MCF 10A (cell line): ENCODE measurements at regions of chr1 and their contacts with region 1.

Region 1: DNA sequence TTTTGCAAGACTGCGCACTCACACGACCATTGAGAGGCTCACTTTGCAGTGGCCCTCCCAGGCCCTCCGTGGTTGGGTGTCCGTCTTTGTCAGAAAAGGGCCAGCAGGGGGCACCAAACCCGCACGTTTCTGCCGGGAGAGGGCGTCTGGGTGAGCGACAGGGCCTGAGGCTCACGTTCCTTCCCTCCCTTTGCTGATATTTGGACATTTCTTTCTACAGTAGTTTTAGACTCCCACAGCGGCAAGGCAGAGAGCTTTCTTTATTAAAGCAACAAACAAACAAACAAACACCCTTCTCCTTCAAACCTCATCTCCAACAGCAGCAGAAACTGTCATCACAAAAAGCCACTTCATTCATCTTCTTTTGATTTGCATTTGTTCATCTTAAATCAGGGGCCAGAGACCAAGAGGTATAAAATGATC is 79.2 kb upstream of the WDR26 start:
- DNase-seq: peak; percentile 97
- H3K4me3 Mint-ChIP-seq: no peak overlapping the region
- H3K27ac Mint-ChIP-seq: no peak overlapping the region
- H3K4me1 Mint-ChIP-seq: peaks cover 14% of the 10 kb centered on the region
- H3K27me3 Mint-ChIP-seq: no peaks in the 10 kb centered on the region
- CTCF ChIP-seq: peak; percentile 100

Region 2: DNA sequence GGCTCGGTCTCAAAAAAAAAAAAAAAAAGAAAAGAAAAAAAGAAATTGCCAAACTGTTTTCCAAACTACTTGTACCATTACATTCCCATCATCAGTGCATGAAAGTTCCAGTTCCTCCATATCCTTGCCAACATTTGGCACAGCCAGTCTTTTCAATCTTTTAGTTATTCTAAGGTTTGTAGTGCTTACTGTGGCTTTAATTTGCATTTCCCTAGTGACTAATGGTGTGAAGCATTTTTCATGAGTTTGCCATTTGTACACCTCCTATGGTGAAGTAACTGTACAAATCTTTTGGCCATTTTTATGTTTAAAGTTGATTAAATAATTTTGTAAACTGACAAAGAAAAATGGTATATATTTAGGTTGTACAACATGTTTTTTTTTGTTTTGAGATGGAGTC is 260.1 kb before region 1 on chr1:
- CTCF ChIA-PET with region 1: no interaction called
- POLR2A ChIA-PET with region 1: no interaction called
- intact Hi-C with region 1: no loop called
- DNase-seq: no peak
- H3K4me3 Mint-ChIP-seq: no peak overlapping the region
- H3K27ac Mint-ChIP-seq: no peak overlapping the region
- H3K4me1 Mint-ChIP-seq: peaks cover 7% of the 10 kb centered on the region
- H3K27me3 Mint-ChIP-seq: no peaks in the 10 kb centered on the region
- CTCF ChIP-seq: no peak

Region 3: DNA sequence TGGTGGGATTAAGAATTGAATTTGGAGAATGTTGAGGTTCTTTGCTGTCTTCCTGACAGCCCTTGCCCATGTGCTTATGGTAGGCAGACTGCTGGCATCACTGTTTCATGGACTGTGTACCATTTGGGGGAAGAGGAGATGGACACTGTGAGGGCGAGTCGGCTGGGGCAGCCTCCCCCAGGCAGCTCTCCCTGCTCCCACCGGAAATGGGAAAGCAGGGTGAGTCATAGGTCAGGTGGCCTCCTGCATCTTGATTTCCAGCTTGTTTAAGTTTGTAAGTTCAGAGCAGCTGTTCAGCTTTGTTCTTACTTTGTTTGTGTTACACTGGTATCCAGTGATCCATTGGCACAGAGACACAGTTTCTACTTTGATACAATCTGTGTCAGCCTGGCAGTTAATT is 15.1 kb after region 1 on chr1:
- CTCF ChIA-PET with region 1: interaction called, 105 read pairs
- POLR2A ChIA-PET with region 1: interaction called, 6 read pairs
- intact Hi-C with region 1: no loop called
- DNase-seq: peak; percentile 76
- H3K4me3 Mint-ChIP-seq: no peak overlapping the region
- H3K27ac Mint-ChIP-seq: no peak overlapping the region
- H3K4me1 Mint-ChIP-seq: peaks cover 24% of the 10 kb centered on the region
- H3K27me3 Mint-ChIP-seq: no peaks in the 10 kb centered on the region
- CTCF ChIP-seq: no peak

Region 4: DNA sequence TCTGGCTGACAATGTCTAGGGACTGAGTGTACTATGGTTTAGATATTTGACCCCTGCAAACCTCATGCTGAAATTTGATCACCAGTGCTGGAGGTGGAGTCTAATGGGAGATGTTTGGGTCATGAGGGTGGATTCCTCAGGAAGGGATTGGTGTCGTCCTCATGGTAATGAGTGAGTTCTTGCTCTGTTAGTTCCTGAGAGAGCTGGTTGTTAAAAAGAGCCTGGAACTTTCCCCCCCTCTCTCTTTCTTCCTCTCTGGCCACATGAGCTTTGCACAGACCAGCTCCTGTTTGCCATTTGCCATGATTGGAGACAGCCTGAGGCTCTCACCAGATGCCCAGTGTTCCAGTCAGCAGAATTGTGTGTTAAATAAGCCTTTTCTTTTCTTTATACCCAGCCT is 65.7 kb after region 1 on chr1:
- CTCF ChIA-PET with region 1: interaction called, 15 read pairs
- POLR2A ChIA-PET with region 1: no interaction called
- intact Hi-C with region 1: no loop called
- DNase-seq: peak; percentile 63
- H3K4me3 Mint-ChIP-seq: no peak overlapping the region
- H3K27ac Mint-ChIP-seq: no peak overlapping the region
- H3K4me1 Mint-ChIP-seq: peaks cover 8% of the 10 kb centered on the region
- H3K27me3 Mint-ChIP-seq: no peaks in the 10 kb centered on the region
- CTCF ChIP-seq: no peak

Region 5: GRCh38 chr1:224700915-224701531 is 187.2 kb after region 1 on chr1:
- CTCF ChIA-PET with region 1: interaction called, 12 read pairs
- POLR2A ChIA-PET with region 1: no interaction called
- intact Hi-C with region 1: no loop called
- DNase-seq: peak; percentile 58
- H3K4me3 Mint-ChIP-seq: no peak overlapping the region
- H3K27ac Mint-ChIP-seq: no peak overlapping the region
- H3K4me1 Mint-ChIP-seq: no peaks in the 10 kb centered on the region
- H3K27me3 Mint-ChIP-seq: no peaks in the 10 kb centered on the region
- CTCF ChIP-seq: peak; percentile 39

Region 6: GRCh38 chr1:224873434-224874369 is 359.9 kb after region 1 on chr1:
- CTCF ChIA-PET with region 1: interaction called, 40 read pairs
- POLR2A ChIA-PET with region 1: interaction called, 4 read pairs
- intact Hi-C with region 1: no loop called
- DNase-seq: peak; percentile 93
- H3K4me3 Mint-ChIP-seq: no peak overlapping the region
- H3K27ac Mint-ChIP-seq: no peak overlapping the region
- H3K4me1 Mint-ChIP-seq: no peaks in the 10 kb centered on the region
- H3K27me3 Mint-ChIP-seq: peaks cover 13% of the 10 kb centered on the region
- CTCF ChIP-seq: no peak

Region 7: GRCh38 chr1:224914292-224914900 is 400.6 kb after region 1 on chr1:
- CTCF ChIA-PET with region 1: interaction called, 103 read pairs
- POLR2A ChIA-PET with region 1: no interaction called
- intact Hi-C with region 1: no loop called
- DNase-seq: no peak
- H3K4me3 Mint-ChIP-seq: no peak overlapping the region
- H3K27ac Mint-ChIP-seq: no peak overlapping the region
- H3K4me1 Mint-ChIP-seq: no peaks in the 10 kb centered on the region
- H3K27me3 Mint-ChIP-seq: no peaks in the 10 kb centered on the region
- CTCF ChIP-seq: no peak

Region 8: GRCh38 chr1:225209153-225209552 is 695.4 kb after region 1 on chr1:
- CTCF ChIA-PET with region 1: no interaction called
- POLR2A ChIA-PET with region 1: no interaction called
- intact Hi-C with region 1: no loop called
- DNase-seq: no peak
- H3K4me3 Mint-ChIP-seq: no peak overlapping the region
- H3K27ac Mint-ChIP-seq: no peak overlapping the region
- H3K4me1 Mint-ChIP-seq: no peaks in the 10 kb centered on the region
- H3K27me3 Mint-ChIP-seq: no peaks in the 10 kb centered on the region
- CTCF ChIP-seq: no peak